Body of pancreas (tissue), 4 donors: ENCODE measurements at regions of chr14 and their contacts with region 1.

Region 1: DNA sequence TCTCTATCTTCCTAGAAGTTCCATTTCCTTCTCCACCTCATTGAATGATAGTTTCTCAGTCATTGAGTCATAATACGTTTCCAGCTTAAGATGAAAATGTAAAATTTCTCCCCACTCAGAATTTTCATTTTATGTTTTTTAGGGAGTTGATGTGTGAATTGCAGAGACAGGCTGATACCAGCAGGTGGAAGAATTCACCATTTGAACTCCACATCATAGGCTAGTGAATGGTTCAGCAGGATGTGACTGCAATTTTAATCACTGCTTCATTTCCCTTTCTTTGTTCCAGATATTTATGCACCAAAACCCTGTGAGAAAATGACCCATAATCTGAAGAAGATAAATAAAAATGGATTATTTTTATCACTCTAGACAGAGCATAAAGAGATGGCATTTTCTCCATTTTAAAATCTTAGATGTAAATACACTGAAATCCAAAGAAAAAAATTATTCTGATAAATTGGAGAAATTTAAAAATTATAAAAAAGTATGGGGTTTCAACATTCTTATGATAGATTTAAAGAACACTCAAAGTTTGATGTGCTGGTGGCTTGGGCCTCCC is 10.6 kb upstream of the PYGL start:
- DNase-seq: no peak
- ATAC-seq: peak; percentile 56
- H3K4me3 ChIP-seq: no peak overlapping the region
- H3K27ac ChIP-seq: no peak overlapping the region
- H3K4me1 ChIP-seq: no peaks in the 10 kb centered on the region
- H3K27me3 ChIP-seq: no peaks in the 10 kb centered on the region
- CTCF ChIP-seq: peak; percentile 15 to 63 (median 55)
- POLR2A ChIP-seq: no peak

Region 2: DNA sequence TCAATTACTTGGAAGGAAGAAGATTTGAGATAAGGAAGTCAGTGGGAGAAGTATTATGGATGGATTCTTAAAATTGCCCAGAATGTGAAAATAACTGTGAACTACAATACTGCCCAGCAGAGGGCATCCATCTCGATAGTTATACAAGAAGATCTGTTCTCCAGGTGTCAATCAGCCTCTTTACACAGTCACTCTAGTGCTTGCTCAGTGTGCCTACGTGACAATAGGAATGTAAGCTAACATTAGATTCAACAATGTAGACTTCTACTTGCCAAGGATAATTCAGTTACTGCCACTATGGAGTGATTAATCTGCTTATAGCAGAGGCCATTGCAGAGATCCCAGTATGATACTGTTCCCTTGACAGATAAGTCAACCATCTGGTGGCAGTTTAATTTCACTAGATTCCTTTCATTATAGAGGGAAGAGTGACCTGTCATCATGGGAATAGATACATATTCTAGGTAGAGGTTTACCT is 411.9 kb before region 1 on chr14:
- intact Hi-C with region 1: no loop called
- DNase-seq: peak; percentile 52 to 67 (median 57)
- ATAC-seq: peak; percentile 54
- H3K4me3 ChIP-seq: no peak overlapping the region
- H3K27ac ChIP-seq: no peak overlapping the region
- H3K4me1 ChIP-seq: peaks cover 35% of the 10 kb centered on the region
- H3K27me3 ChIP-seq: no peaks in the 10 kb centered on the region
- CTCF ChIP-seq: peak; percentile 29 to 67 (median 65)
- POLR2A ChIP-seq: no peak

Region 3: GRCh38 chr14:51219473-51220448 is 264.9 kb after region 1 on chr14:
- intact Hi-C with region 1: loop called (anchors 10 kb)
- DNase-seq: peak in 2 of 4 donors; percentile 8 to 15
- ATAC-seq: no peak
- H3K4me3 ChIP-seq: no peak overlapping the region
- H3K27ac ChIP-seq: no peak overlapping the region
- H3K4me1 ChIP-seq: no peaks in the 10 kb centered on the region
- H3K27me3 ChIP-seq: no peaks in the 10 kb centered on the region
- CTCF ChIP-seq: peak; percentile 37 to 67 (median 54)
- POLR2A ChIP-seq: no peak